MCF 10A (cell line): ENCODE measurements at regions of chrX and their contacts with region 1.

Region 1: DNA sequence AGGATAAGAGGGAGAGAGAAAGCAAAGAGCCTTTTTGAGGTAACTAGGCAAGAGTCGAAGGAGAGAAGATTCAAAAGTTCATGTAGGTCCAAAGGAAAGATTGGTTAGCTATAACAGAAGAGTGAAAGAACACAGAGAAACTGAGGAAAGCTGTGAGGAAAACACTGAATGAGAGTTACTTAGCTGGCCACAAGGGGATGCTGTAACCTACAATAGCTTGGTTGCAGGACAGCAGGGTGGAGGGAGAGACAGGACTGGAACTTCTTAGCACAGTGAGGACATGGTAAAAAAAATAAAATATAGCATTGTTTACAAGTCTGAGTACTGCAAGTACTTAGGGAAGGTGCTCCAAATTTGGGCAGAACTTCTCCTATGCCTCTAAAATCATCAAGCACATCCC is 48.3 kb downstream of the RAI2 start:
- DNase-seq: peak; percentile 13
- H3K4me3 Mint-ChIP-seq: no peak overlapping the region
- H3K27ac Mint-ChIP-seq: no peak overlapping the region
- H3K4me1 Mint-ChIP-seq: no peaks in the 10 kb centered on the region
- H3K27me3 Mint-ChIP-seq: no peaks in the 10 kb centered on the region
- CTCF ChIP-seq: peak; percentile 28

Region 2: GRCh38 chrX:17590892-17591740 is 221.6 kb before region 1 on chrX:
- CTCF ChIA-PET with region 1: no interaction called
- POLR2A ChIA-PET with region 1: no interaction called
- intact Hi-C with region 1: no loop called
- DNase-seq: peak; percentile 79
- H3K4me3 Mint-ChIP-seq: peak overlapping the region; percentile 38
- H3K27ac Mint-ChIP-seq: peak overlapping the region; percentile 30
- H3K4me1 Mint-ChIP-seq: peaks cover 30% of the 10 kb centered on the region
- H3K27me3 Mint-ChIP-seq: peaks cover 14% of the 10 kb centered on the region
- CTCF ChIP-seq: peak; percentile 86

Region 3: GRCh38 chrX:17829566-17829965 is 16.8 kb after region 1 on chrX:
- CTCF ChIA-PET with region 1: interaction called, 10 read pairs
- POLR2A ChIA-PET with region 1: interaction called, 4 read pairs
- intact Hi-C with region 1: no loop called
- DNase-seq: no peak
- H3K4me3 Mint-ChIP-seq: no peak overlapping the region
- H3K27ac Mint-ChIP-seq: no peak overlapping the region
- H3K4me1 Mint-ChIP-seq: no peaks in the 10 kb centered on the region
- H3K27me3 Mint-ChIP-seq: peaks cover 2% of the 10 kb centered on the region
- CTCF ChIP-seq: no peak

Region 4: DNA sequence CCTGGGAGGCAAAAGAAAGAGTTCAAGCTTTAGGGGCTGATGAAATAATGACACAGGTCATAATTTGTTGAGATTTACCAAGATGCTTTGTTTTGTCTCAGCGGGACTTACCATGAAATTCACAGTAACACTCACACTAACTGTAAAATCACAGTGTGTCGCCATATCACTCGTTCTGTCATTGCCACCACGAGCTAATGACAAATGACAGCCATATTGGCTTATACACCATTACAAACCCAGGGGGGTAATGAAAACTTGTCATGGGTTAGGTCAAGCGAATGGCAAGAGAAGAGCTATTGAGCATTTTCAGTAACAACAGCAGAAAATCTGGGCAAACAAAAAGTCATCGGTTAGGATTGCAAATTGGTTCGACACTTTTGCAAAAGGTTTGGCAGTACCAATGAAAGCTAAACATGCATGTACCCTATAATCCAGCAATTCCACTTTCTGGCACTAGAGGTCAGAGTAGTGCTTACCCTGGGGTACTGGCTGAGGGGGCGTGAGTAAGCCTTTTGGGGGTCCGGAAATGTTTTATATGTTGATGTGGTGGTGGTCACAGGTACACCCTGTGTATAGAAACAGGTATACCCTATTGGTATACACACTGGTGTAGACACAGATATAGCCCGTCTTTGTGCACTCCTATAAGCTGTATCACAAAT is 132.2 kb after region 1 on chrX:
- CTCF ChIA-PET with region 1: no interaction called
- POLR2A ChIA-PET with region 1: no interaction called
- intact Hi-C with region 1: no loop called
- DNase-seq: peak; percentile 31
- H3K4me3 Mint-ChIP-seq: no peak overlapping the region
- H3K27ac Mint-ChIP-seq: no peak overlapping the region
- H3K4me1 Mint-ChIP-seq: no peaks in the 10 kb centered on the region
- H3K27me3 Mint-ChIP-seq: peaks cover 8% of the 10 kb centered on the region
- CTCF ChIP-seq: peak; percentile 46

Region 5: GRCh38 chrX:18410043-18410442 is 597.3 kb after region 1 on chrX:
- CTCF ChIA-PET with region 1: no interaction called
- POLR2A ChIA-PET with region 1: no interaction called
- intact Hi-C with region 1: no loop called
- DNase-seq: peak; percentile 55
- H3K4me3 Mint-ChIP-seq: no peak overlapping the region
- H3K27ac Mint-ChIP-seq: no peak overlapping the region
- H3K4me1 Mint-ChIP-seq: no peaks in the 10 kb centered on the region
- H3K27me3 Mint-ChIP-seq: no peaks in the 10 kb centered on the region
- CTCF ChIP-seq: peak; percentile 44